ENCODE measurements at regions of chr3 and their contacts with region 1.

Region 1: DNA sequence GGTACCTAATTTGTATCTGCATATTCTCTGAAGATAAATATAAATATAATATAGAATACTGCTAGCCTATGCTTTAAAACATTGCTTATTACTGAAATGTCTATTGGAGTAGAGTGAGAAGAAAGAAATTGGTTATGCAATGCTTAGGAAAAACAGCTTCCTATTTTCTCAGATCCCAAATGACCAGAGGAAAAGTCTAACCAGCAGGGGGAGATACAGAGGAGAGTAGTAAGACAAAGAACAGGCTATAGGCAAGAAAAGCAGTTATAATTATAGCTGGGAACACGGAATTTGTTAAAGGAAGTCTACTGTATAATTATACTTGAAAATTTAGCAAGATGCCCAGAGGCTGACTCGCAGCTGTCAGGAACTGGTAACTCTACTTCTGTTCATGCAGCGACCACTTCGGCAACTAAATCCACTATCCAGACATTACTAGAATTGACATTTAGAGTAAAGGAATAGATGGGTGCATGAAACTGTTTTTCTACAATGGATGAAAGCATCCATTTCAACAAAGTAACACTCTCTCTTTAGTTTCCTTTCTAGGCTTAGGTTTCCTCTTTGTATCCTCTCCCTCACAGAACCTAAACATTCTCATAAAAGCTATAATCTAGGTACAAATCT is 97.2 kb downstream of the TBC1D5 start:
- DNase-seq: peak; percentile 28
- H3K4me3 ChIP-seq: no peak overlapping the region
- H3K27ac ChIP-seq: no peak overlapping the region
- H3K4me1 ChIP-seq: peaks cover 0 to 2% of the 10 kb centered on the region in 2 experiments; a peak in 2 of 4 replicates
- H3K27me3 ChIP-seq: no peaks in the 10 kb centered on the region
- CTCF ChIP-seq: peak; percentile 80
- EP300 ChIP-seq: no peak
- RAD21 ChIP-seq: peak; percentile 70

Region 2: DNA sequence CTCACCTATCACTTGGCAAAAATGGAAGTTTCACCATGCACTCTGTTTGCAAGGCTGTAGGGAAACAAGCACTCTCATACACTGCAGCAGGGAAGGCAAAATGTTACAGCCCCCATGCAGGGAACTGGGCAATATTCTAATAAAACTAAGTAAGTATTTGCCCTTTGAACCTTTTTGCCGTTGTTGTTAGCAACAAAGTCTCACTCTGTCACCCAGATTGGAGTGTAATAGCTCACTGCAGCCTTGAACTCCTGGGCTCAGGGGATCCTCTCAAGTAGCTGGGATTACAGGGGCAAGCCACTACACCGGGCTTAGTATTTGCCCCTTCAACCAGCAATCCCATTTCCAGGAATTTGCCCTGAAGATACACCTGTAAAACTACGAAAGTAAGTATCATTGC is 25.2 kb before region 1 on chr3:
- CTCF ChIA-PET with region 1: interaction called, 14 read pairs
- POLR2A ChIA-PET with region 1: no interaction called
- DNase-seq: no peak
- H3K4me3 ChIP-seq: no peak overlapping the region
- H3K27ac ChIP-seq: no peak overlapping the region
- H3K4me1 ChIP-seq: no peaks in the 10 kb centered on the region
- H3K27me3 ChIP-seq: no peaks in the 10 kb centered on the region
- CTCF ChIP-seq: no peak
- EP300 ChIP-seq: no peak
- RAD21 ChIP-seq: no peak

Region 3: DNA sequence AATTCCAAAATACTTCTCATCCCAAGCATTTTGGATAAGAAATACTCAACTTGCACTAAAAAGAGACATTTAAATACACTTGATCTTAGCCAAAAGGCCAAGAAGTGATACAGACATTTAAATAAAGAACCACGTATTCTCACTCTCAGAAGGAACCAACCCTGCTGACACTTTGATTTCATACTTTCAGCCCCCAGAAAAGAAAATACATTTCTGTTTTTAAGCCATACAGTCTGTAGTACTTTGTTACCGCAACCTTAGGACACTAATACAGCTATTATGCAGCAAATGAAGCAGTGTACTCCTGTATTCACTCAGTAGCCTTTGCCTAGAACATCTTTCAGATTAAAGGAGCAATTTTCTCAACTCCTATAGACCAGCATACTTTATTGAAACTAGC is 10.6 kb after region 1 on chr3:
- CTCF ChIA-PET with region 1: interaction called, 37 read pairs
- POLR2A ChIA-PET with region 1: no interaction called
- DNase-seq: no peak
- H3K4me3 ChIP-seq: no peak overlapping the region
- H3K27ac ChIP-seq: no peak overlapping the region
- H3K4me1 ChIP-seq: no peaks in the 10 kb centered on the region; a peak in 1 of 4 replicates
- H3K27me3 ChIP-seq: no peaks in the 10 kb centered on the region
- CTCF ChIP-seq: no peak
- EP300 ChIP-seq: no peak
- RAD21 ChIP-seq: no peak

Region 4: DNA sequence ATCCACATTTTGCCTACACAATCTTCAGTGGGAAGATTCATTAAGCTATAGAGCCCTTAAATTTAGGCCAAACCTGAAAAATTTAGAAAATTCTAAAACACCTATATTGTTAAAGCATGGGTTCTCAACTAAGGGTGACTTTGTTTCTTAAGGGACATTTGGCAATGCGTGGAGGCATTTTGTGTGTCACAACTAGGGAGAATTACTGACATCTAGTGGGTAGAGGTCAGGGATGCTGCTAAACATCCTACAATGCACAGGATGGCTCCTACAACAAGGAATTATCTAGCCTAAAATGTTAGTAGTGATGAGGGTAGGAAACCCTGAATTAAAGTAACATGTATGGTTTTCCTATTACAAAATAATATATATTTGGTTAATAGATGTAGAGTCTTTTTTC is 41.4 kb after region 1 on chr3:
- CTCF ChIA-PET with region 1: interaction called, 10 read pairs
- POLR2A ChIA-PET with region 1: no interaction called
- DNase-seq: peak; percentile 13
- H3K4me3 ChIP-seq: no peak overlapping the region
- H3K27ac ChIP-seq: no peak overlapping the region
- H3K4me1 ChIP-seq: peaks cover 1 to 5% of the 10 kb centered on the region in 2 experiments; a peak in 3 of 4 replicates
- H3K27me3 ChIP-seq: no peaks in the 10 kb centered on the region
- CTCF ChIP-seq: peak; percentile 44; the same call in 1 of the 2 replicates
- EP300 ChIP-seq: no peak
- RAD21 ChIP-seq: peak; percentile 70

Region 5: DNA sequence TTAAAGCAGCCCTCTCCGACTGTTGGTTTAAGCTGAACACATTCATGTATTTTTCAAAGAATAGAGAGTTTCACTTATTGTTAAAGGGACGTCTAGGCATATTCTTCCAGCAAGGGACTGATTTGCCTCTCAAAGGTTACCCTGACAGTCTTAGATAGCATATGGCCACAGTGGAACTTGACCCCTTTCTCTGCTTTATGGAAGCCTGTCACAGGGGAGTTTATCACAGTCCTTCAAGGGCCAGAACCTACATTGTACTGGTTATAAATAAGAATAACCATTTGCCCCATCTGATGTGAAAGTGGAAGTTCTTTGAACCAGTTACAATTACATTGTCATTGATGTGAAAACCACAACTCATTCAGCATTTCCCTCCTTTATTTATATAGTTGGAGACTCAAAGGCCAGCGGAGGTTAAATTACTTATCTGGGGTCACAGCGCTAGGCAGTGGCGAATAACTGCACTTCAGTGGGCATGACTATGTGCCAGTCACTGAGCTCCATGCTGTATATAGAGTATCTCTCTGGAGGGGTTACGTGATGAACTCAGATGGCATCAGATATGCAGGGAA is 157.7 kb after region 1 on chr3:
- CTCF ChIA-PET with region 1: no interaction called
- POLR2A ChIA-PET with region 1: no interaction called
- DNase-seq: no peak
- H3K4me3 ChIP-seq: no peak overlapping the region
- H3K27ac ChIP-seq: no peak overlapping the region
- H3K4me1 ChIP-seq: no peaks in the 10 kb centered on the region
- H3K27me3 ChIP-seq: no peaks in the 10 kb centered on the region
- CTCF ChIP-seq: no peak
- EP300 ChIP-seq: no peak
- RAD21 ChIP-seq: no peak

Measured in SK-N-SH (cell line).